BJ (cell line): ENCODE measurements at regions of chr9 and their contacts with region 1.

Region 1: DNA sequence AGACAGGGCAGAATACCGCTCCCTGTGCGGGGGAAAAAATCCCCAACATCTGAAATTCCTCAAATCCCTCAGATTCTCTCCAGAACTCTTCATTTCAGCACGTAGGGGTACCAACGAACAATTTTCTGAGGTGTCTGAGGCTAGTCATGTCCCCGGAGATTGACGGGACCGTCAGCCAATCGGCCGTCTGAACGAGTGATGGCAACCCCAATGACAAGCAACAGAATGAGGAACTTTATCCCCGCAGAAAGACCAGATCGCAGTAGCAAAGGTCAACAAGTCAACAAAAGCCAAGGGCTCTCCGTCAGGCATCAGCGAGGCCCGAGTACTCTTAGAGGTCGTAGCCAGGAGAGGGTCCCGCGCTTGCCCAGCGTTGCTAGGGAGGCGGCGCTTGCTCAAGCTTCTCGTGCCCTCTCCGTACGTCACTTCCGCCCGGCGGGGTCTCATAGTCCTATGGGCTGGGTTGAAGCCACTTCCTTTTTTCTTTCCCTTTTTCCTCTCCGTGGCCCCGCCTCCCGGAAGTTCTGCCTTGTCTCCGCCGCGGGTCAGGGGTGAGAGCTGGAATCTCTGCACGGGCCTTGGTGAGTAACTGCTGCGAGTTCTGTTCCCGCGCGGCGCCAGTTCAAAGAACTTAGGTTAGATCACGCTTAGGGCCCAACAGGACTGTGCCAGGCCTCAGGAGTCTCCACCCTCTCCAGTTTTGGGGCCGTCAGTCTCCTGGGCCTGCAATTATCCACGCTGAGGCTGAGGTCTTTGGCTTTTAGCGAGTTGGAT is at the start of gene RNF20:
- DNase-seq: peak; percentile 91
- H3K4me3 ChIP-seq: peak within 1 kb of the TSS; percentile 61
- H3K27me3 ChIP-seq: no peaks in the 10 kb centered on the region
- CTCF ChIP-seq: no peak
- polyA plus RNA-seq, gene RNF20: 18.0 and 30.4 TPM in 2 replicates

Region 2: GRCh38 chr9:101465392-101465791 is 68.1 kb before region 1 on chr9:
- CTCF ChIA-PET with region 1: interaction called, 490 read pairs
- POLR2A ChIA-PET with region 1: interaction called, 17 read pairs
- DNase-seq: peak; percentile 46
- H3K4me3 ChIP-seq: no peak overlapping the region
- H3K27me3 ChIP-seq: no peaks in the 10 kb centered on the region
- CTCF ChIP-seq: peak; percentile 73

Region 3: DNA sequence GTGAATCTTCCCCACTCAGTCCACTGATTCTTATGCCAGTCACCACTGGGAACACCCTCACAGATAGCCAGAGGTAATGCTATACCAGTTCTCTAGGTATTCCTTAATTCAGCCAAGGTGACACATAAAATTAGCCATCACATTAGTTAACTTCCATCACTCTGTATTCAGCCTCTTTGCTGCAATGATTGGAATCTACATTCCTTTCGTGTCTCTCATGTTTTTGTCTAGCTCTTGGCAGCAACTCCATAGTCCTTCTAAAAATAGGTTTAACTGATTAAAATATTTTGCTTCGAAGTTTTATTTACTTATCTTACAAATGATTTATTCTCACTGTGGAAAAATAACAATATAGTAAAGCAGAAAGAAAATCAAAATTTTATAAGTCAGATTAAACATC is 19.4 kb before region 1 on chr9:
- CTCF ChIA-PET with region 1: interaction called, 13 read pairs
- POLR2A ChIA-PET with region 1: no interaction called
- DNase-seq: peak; percentile 62
- H3K4me3 ChIP-seq: no peak overlapping the region
- H3K27me3 ChIP-seq: no peaks in the 10 kb centered on the region
- CTCF ChIP-seq: no peak

Region 4: GRCh38 chr9:101586651-101587050 is 53.1 kb after region 1 on chr9:
- CTCF ChIA-PET with region 1: no interaction called
- POLR2A ChIA-PET with region 1: no interaction called
- DNase-seq: no peak
- H3K4me3 ChIP-seq: no peak overlapping the region
- H3K27me3 ChIP-seq: no peaks in the 10 kb centered on the region
- CTCF ChIP-seq: no peak

Region 5: GRCh38 chr9:101618698-101619097 is 85.2 kb after region 1 on chr9:
- CTCF ChIA-PET with region 1: no interaction called
- POLR2A ChIA-PET with region 1: no interaction called
- DNase-seq: no peak
- H3K4me3 ChIP-seq: no peak overlapping the region
- H3K27me3 ChIP-seq: no peaks in the 10 kb centered on the region
- CTCF ChIP-seq: no peak